Breast epithelium (tissue), 4 donors: ENCODE measurements at regions of chr13 and their contacts with region 1.

Region 1: DNA sequence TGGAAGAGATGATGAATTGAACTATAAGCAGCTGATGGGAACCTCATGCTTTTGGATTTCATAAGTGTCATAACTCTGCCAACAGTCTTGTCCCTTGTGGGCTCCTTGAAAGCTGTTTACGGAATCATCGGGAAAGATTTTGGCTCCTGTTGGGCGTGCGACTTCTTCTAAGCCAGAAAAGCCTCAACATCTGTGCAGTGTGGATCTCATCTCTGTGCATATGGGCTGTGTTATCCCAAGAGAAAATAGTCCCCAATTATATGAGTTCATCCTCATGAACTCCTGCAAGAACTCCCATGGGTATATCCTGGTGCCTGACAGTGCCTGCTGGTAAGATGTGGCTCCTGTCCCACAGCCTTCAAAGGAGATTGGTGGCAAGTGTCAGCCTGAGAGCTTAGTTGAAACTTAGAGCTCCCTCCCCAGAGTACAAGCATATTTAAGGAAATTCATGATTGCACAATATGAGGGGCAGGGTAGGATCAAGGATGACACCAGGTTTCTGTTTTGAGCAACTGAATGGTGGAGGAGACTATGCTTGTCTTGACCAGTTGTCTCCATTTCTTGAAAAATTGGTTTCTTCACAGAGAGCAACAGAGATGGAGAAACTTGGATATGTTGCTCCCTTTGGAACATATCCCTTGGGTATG is 243.5 kb downstream of the ITGBL1 start:
- DNase-seq: no peak
- H3K4me3 ChIP-seq: no peak overlapping the region
- H3K27ac ChIP-seq: no peak overlapping the region
- H3K4me1 ChIP-seq: no peaks in the 10 kb centered on the region
- H3K27me3 ChIP-seq: no peaks in the 10 kb centered on the region
- CTCF ChIP-seq: no peak
- POLR2A ChIP-seq: no peak

Region 2: GRCh38 chr13:101681834-101682233 is 14.2 kb before region 1 on chr13:
- intact Hi-C with region 1: no loop called
- DNase-seq: no peak
- H3K4me3 ChIP-seq: no peak overlapping the region
- H3K27ac ChIP-seq: no peak overlapping the region
- H3K4me1 ChIP-seq: no peaks in the 10 kb centered on the region
- H3K27me3 ChIP-seq: no peaks in the 10 kb centered on the region
- CTCF ChIP-seq: no peak
- POLR2A ChIP-seq: no peak

Region 3: GRCh38 chr13:101706651-101707050 is 10.7 kb after region 1 on chr13:
- intact Hi-C with region 1: loop called (anchors 1 kb)
- DNase-seq: peak in 1 of 2 donors; percentile 30
- H3K4me3 ChIP-seq: no peak overlapping the region
- H3K27ac ChIP-seq: no peak overlapping the region
- H3K4me1 ChIP-seq: no peaks in the 10 kb centered on the region
- H3K27me3 ChIP-seq: no peaks in the 10 kb centered on the region
- CTCF ChIP-seq: no peak
- POLR2A ChIP-seq: no peak